Activated T-helper 1 cell treated with anti-CD3 and anti-CD28 coated beads, Interleukin-12 subunit alpha, Interleukin-12 subunit beta, Interleukin-2, Interleukin-4 antibody, amounts not matched to agents 30 ng/mL and 10 ng/mL and 1 ng/mL, durations not matched to agents 14 hours and 24 hours and 36 hours (primary cell): ENCODE measurements at regions of chr2 and their contacts with region 1.

Region 1: DNA sequence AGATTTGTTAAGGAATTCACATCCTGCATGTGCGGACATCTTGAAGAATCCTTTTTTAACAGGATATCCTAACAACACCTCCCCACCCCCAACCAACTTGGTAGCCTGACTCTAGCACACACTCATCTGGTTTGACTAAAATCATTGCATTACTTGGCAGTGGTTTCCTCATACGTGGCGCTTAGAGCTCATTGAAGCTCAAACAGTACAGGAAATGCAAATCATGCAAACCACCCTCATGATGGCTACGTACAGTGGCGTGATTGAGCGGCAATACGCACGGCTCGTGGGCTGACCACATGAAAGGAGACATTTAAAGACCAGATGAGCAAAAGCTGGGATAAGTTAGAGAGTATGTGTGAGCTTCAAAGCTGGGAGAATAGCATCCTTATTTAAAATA is 336.2 kb downstream of the ZEB2 start:
- DNase-seq: peak; percentile 74
- H3K4me3 Mint-ChIP-seq: peak overlapping the region; percentile 50
- H3K27ac Mint-ChIP-seq: peak overlapping the region; percentile 89
- H3K4me1 Mint-ChIP-seq: peaks cover 37% of the 10 kb centered on the region
- H3K27me3 Mint-ChIP-seq: no peaks in the 10 kb centered on the region

Region 2: DNA sequence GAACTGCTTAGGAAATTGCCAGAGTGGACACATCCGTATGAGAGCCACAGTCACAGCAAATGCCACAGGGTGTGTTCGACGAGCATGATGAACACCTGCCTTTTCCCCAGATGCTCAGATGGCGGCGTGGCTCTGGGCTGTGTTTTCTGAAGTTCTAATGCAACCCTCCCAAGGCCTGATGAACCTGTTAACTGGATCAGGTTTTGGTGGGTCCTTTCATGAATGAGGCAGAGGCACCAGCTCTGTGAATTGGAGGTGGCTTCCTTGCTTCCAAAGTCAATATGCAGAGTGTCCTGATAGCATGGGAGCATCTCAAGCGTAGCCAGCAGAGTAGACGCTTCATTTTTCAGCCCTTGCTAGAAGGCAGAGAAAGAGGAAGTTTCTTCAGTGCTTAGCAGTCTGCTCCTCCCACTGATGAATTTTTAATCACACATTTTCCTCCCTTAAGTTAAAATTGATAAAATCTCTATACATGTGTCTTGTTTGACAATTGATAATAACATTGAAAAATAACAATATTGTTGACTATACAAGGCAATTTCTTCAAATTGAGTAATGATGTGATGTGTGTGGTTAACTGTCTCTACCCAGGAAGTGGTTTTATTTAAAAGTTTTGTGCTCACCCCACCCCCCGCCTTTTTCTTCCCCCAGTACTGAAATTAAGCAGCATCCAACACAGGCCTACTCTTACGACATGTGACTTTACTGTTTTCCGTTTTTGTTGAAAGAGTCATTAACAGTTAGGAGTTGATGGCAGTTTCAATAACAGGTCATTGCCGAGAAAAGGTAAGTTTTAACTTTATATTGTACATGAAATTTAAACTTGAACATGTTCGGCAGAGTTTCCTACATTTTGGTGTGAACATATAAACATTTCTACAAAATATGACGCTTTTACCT is 1054.8 kb before region 1 on chr2 and contains the start of gene ARHGAP15:
- intact Hi-C with region 1: loop called (anchors 5 kb)
- DNase-seq: peak; percentile 55
- H3K4me3 Mint-ChIP-seq: peak within 1 kb of the TSS; percentile 75
- H3K27ac Mint-ChIP-seq: peak within 1 kb of the TSS; percentile 93
- H3K4me1 Mint-ChIP-seq: peaks cover 40% of the 10 kb centered on the region
- H3K27me3 Mint-ChIP-seq: no peaks in the 10 kb centered on the region
- total RNA-seq, gene ARHGAP15: 64.3 and 65.3 TPM in 2 replicates

Region 3: GRCh38 chr2:143901185-143901842 is 282.4 kb before region 1 on chr2:
- intact Hi-C with region 1: loop called (anchors 5 kb)
- DNase-seq: no peak
- H3K4me3 Mint-ChIP-seq: no peak overlapping the region
- H3K27ac Mint-ChIP-seq: no peak overlapping the region
- H3K4me1 Mint-ChIP-seq: peaks cover 20% of the 10 kb centered on the region
- H3K27me3 Mint-ChIP-seq: peaks cover 23% of the 10 kb centered on the region

Region 4: DNA sequence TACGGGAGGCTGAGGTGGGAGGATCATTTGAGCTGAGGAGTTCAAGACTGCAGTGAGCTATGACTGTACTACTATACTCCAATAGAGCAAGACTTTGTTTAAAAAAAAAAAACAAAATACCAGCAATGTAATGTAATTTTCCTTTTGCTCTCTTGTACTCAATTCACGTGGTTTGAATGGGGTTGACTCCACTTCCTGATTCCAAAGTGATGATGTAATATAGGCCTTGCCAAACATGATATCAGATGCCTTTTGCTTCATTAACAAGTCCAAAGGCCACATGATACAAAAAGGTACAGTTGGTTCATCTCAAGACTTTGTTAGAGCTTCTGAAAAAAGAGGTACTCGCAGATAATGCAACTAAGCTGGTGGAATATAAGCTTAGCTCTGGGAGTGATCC is 14.4 kb after region 1 on chr2:
- intact Hi-C with region 1: loop called (anchors 1 kb)
- DNase-seq: no peak
- H3K4me3 Mint-ChIP-seq: no peak overlapping the region
- H3K27ac Mint-ChIP-seq: peak overlapping the region; percentile 20
- H3K4me1 Mint-ChIP-seq: peaks cover 66% of the 10 kb centered on the region
- H3K27me3 Mint-ChIP-seq: no peaks in the 10 kb centered on the region

Region 5: DNA sequence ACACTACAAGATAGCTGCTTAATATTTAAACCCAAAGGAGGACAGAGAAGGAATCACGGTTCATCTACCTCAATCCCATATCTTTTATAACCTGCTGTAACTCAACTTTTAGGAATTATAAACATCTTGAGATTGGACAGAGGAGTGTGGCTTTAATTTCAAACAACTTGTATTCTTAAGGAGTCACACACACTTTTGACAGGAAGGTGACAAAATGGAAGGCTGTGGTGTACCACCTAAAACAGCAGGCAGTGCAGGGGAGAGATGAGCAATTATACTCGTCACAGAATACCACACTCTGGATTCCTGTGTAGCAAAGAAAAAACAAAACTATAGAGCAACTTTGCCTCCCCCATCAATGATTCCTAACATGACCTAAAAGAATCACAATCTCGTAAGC is 141.4 kb after region 1 on chr2:
- intact Hi-C with region 1: loop called (anchors 1 kb)
- DNase-seq: peak; percentile 55
- H3K4me3 Mint-ChIP-seq: peak overlapping the region; percentile 72
- H3K27ac Mint-ChIP-seq: peak overlapping the region; percentile 97
- H3K4me1 Mint-ChIP-seq: peaks cover 81% of the 10 kb centered on the region
- H3K27me3 Mint-ChIP-seq: no peaks in the 10 kb centered on the region

Region 6: DNA sequence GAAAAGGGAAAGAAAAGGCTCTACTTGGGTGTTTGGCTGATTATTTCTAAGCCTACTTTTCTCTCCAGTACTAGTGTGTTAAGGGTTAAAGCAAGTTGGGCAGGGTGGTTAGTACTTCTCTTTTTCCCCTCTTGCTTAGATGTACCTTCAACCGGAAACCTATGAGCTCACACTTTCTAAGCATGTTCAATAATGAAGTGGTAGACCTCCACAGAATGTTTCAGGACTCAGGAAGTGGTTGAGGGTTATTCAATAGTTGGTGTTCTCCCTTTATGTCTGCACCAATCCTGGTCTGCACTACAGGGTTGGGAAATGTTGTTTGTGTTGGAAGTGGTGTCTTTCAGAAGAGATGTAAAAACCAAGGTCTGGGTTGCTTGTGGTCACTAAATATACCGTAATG is 199.1 kb after region 1 on chr2:
- intact Hi-C with region 1: loop called (anchors 1 kb)
- DNase-seq: peak; percentile 13
- H3K4me3 Mint-ChIP-seq: no peak overlapping the region
- H3K27ac Mint-ChIP-seq: peak overlapping the region; percentile 32
- H3K4me1 Mint-ChIP-seq: peaks cover 44% of the 10 kb centered on the region
- H3K27me3 Mint-ChIP-seq: peaks cover 8% of the 10 kb centered on the region